Heart right ventricle (tissue), 16 donors: ENCODE measurements at regions of chr14 and their contacts with region 1.

Region 1: GRCh38 chr14:60724137-60724619 is at the start of gene SIX4:
- DNase-seq: peak; percentile 41 to 57
- ATAC-seq: peak; percentile 60 to 93 (median 88)
- H3K4me3 ChIP-seq: peak within 1 kb of the TSS; percentile 59 to 80 (median 74)
- H3K27ac ChIP-seq: peak within 1 kb of the TSS in 3 of 10 donors; percentile 21 to 58 (median 54)
- H3K4me1 ChIP-seq: peaks cover 0 to 34% (median 19%) of the 10 kb centered on the region in 9 donors
- H3K27me3 ChIP-seq: peaks cover 0 to 98% (median 67%) of the 10 kb centered on the region in 7 donors
- CTCF ChIP-seq: no peak
- total RNA-seq, gene SIX4: 0.59 to 1.5 (median 0.82) TPM

Region 2: DNA sequence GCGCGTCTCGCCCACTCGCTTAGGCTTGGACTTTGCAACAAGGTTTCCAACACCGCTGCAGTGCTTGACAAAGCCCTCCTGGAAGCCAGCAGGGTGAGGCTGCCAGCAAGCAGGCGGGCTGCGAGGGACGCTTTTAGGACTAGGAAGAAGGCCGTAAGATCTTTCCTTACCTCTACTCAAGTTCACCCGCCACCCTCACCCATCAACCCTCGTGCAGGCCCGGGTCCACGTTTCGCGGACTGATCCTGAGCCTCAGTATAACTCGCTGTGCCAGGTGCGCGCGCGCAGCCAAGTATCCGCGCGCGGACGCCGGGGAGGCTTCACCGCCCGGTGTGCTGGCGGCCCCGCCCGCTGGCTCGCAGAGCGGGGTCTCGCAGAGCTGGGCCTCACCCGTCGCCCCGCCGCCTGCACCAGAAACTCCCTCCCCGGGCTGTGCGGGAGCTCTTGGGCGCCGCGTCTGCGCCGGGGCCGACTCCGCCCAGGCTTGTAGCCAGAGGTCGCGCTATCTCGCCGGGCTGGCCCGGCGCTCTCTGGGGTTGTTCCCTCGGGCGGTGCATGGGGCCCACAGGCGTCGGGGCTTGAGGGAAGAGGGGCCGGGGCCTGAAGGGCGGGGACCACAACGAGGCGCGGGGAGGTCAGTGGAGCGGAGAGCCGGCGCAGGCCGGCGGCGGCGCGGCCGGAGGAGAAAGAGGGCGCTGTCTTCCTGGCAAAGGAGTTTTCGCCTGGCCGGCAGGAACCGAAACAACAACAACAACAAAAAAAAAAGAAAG is 67.3 kb before region 1 on chr14:
- intact Hi-C with region 1: loop called in 1 of 10 experiments (anchors 5 kb)
- DNase-seq: peak; percentile 21 to 48
- ATAC-seq: peak; percentile 60 to 88 (median 78)
- H3K4me3 ChIP-seq: peak overlapping the region; percentile 45 to 71 (median 65)
- H3K27ac ChIP-seq: peak overlapping the region in 1 of 10 donors; percentile 29
- H3K4me1 ChIP-seq: peaks cover 0 to 45% (median 36%) of the 10 kb centered on the region in 9 donors
- H3K27me3 ChIP-seq: peaks cover 26 to 100% (median 100%) of the 10 kb centered on the region in 7 donors
- CTCF ChIP-seq: peak in 8 of 9 donors; percentile 17 to 66 (median 46)